GM10248 (cell line): ENCODE measurements at regions of chr2 and their contacts with region 1.

Region 1: DNA sequence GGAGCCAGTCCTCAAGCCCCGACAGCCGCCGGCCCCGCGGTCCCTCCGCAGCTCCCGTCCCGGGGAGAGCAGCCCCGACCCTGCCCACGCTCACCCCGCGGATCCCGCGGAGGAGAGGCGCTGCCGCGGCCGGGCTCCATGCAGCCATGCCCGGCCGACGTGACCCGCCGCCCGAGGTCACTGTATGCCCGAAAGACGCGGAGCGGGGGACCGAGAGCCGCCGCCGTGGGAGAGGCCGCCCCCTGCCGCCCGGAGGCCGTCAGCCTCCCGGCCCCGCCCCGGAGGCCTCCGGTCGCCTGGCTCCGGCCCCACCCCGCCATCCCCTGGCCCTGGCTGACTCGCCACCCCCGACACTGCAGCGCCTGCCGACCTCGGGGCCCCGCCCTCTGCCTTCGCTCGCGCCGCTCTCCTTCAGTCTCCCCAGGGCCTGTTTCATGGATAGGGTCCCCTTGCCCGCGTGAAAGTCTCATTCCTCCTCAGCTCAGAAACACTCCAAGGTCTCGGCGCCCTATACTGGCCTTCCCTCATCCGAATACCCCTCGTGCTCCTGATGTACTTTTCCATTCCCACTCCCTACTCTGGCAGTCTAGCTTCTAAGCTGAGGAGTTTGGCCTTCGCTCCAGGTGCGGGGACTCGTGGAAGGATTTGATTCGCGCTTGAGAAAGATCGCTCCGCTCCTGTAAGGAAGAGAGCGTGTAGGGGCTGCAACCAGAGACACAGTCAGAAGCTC is at the start of gene BOLA3:
- DNase-seq: peak; percentile 97
- CTCF ChIP-seq: peak; percentile 81

Region 2: DNA sequence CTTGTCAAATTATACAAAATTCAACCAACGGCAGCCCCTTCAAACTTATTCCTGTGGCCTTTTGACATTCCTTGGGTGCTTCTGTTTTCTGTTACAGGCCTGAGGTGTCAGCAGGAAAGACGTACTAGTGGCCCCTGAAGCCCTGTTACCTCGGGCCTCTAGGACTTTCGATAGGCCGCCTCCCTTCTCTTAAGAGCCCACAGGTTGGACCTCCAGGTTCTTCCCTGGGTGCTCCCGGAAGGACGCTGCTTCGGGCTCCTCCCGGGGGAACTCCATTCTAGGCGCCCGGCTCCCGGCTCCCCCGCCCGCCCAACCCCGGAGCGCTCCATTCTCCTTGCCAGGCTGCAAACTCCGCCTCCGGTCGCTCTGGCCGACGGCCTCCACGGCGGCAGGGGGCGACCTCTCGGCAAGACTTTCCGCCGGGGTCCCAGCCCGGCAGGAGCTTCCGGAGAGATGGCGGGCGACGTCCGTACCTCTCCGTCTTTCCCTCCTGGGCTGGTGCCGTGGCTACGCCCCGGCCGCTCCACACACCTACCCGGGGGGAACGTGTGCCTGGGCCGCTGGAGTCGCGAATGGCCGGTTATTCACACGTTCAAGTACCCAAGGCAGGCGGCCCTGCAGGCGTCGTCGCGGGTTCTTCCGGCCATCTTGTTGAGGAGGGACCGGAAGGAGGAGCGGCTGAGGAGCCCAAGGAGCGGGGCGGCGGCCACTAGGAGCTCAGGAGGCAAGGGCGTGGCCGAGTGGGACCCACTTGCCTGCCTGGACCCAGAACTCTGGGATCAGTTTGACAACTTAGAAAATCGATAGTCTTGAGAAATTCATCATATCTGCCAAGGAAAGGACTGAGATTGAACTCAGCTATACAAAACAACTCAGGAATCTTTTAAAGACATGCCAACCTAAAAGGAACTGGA is 27.7 kb before region 1 on chr2:
- CTCF ChIA-PET with region 1: interaction called, 20 read pairs
- POLR2A ChIA-PET with region 1: no interaction called
- DNase-seq: peak; percentile 94
- CTCF ChIP-seq: peak; percentile 88

Region 3: GRCh38 chr2:74168739-74169138 is 20.8 kb after region 1 on chr2:
- CTCF ChIA-PET with region 1: interaction called, 138 read pairs
- POLR2A ChIA-PET with region 1: interaction called, 6 read pairs
- DNase-seq: peak; percentile 41
- CTCF ChIP-seq: no peak